Caco-2 (cell line): ENCODE measurements at regions of chr2 and their contacts with region 1.

Region 1: GRCh38 chr2:113080134-113080533 is 12.4 kb downstream of the IL1F10 start:
- DNase-seq: peak in 1 of 2 experiments; percentile 74
- H3K4me3 ChIP-seq: no peak overlapping the region
- H3K4me3 Mint-ChIP-seq: no peak overlapping the region
- H3K27ac Mint-ChIP-seq: no peak overlapping the region
- H3K4me1 ChIP-seq: no peaks in the 10 kb centered on the region
- H3K4me1 Mint-ChIP-seq: no peaks in the 10 kb centered on the region
- H3K27me3 ChIP-seq: no peaks in the 10 kb centered on the region; the same call in 1 of the 2 replicates
- H3K27me3 Mint-ChIP-seq: peaks cover 2% of the 10 kb centered on the region
- CTCF ChIP-seq: peak; percentile 84 to 91

Region 2: GRCh38 chr2:112821142-112821541 is 259.0 kb before region 1 on chr2:
- CTCF ChIA-PET with region 1: no interaction called
- POLR2A ChIA-PET with region 1: no interaction called
- intact Hi-C with region 1: no loop called
- DNase-seq: no peak
- H3K4me3 ChIP-seq: no peak overlapping the region
- H3K4me3 Mint-ChIP-seq: no peak overlapping the region
- H3K27ac Mint-ChIP-seq: no peak overlapping the region
- H3K4me1 ChIP-seq: 0 out of 2 replicates have a peak, but pooled peaks cover 5% of the 10 kb centered on the region
- H3K4me1 Mint-ChIP-seq: no peaks in the 10 kb centered on the region
- H3K27me3 ChIP-seq: no peaks in the 10 kb centered on the region
- H3K27me3 Mint-ChIP-seq: no peaks in the 10 kb centered on the region
- CTCF ChIP-seq: no peak

Region 3: GRCh38 chr2:113138428-113139322 is 58.5 kb after region 1 on chr2:
- CTCF ChIA-PET with region 1: interaction called, 34 read pairs
- POLR2A ChIA-PET with region 1: no interaction called
- intact Hi-C with region 1: loop called (anchors 1 kb)
- DNase-seq: peak; percentile 67 to 84
- H3K4me3 ChIP-seq: peak overlapping the region; percentile 27
- H3K4me3 Mint-ChIP-seq: peak overlapping the region; percentile 59
- H3K27ac Mint-ChIP-seq: peak overlapping the region; percentile 61
- H3K4me1 ChIP-seq: peaks cover 12% of the 10 kb centered on the region
- H3K4me1 Mint-ChIP-seq: peaks cover 12% of the 10 kb centered on the region
- H3K27me3 ChIP-seq: no peaks in the 10 kb centered on the region
- H3K27me3 Mint-ChIP-seq: no peaks in the 10 kb centered on the region
- CTCF ChIP-seq: peak; percentile 80 to 81

Region 4: GRCh38 chr2:113181258-113182051 is 101.3 kb after region 1 on chr2:
- CTCF ChIA-PET with region 1: interaction called, 12 read pairs
- POLR2A ChIA-PET with region 1: no interaction called
- intact Hi-C with region 1: loop called (anchors 5 kb)
- DNase-seq: no peak
- H3K4me3 ChIP-seq: no peak overlapping the region
- H3K4me3 Mint-ChIP-seq: no peak overlapping the region
- H3K27ac Mint-ChIP-seq: no peak overlapping the region
- H3K4me1 ChIP-seq: peaks cover 31% of the 10 kb centered on the region
- H3K4me1 Mint-ChIP-seq: peaks cover 10% of the 10 kb centered on the region
- H3K27me3 ChIP-seq: no peaks in the 10 kb centered on the region; the same call in 1 of the 2 replicates
- H3K27me3 Mint-ChIP-seq: no peaks in the 10 kb centered on the region
- CTCF ChIP-seq: no peak

Region 5: DNA sequence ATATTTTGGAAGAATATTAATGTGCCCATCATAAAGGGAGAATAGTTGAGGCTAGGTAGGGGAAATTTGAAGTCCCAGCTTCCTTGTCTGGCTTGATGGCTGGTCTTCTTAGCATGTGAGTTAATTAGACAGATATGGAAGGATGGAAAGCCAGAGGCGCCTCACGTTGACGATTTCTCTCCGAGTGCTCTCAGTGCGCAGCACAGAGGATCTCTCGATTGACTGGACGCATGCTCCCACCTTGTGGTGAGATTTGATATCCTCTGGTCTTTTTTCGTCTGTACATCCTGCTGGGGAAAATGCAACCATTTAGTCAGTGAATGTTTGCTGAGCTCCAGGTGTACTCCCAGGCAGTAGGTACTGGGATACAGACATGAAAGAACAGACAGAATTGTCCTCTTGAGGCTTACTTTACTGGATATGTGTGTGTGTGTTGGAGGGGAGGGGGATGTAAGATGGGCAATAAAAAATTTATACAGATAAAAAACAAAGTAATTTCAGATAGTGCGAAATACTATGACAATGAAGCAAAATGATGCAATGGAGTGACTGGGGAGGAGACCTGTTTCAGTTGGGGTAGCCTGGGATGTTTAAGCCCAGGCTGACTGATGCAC is 290.5 kb after region 1 on chr2:
- CTCF ChIA-PET with region 1: interaction called, 5 read pairs
- POLR2A ChIA-PET with region 1: no interaction called
- intact Hi-C with region 1: loop called (anchors 5 kb)
- DNase-seq: peak; percentile 84 to 85
- H3K4me3 ChIP-seq: no peak overlapping the region
- H3K4me3 Mint-ChIP-seq: no peak overlapping the region
- H3K27ac Mint-ChIP-seq: no peak overlapping the region
- H3K4me1 ChIP-seq: peaks cover 19% of the 10 kb centered on the region
- H3K4me1 Mint-ChIP-seq: peaks cover 22% of the 10 kb centered on the region
- H3K27me3 ChIP-seq: no peaks in the 10 kb centered on the region
- H3K27me3 Mint-ChIP-seq: no peaks in the 10 kb centered on the region
- CTCF ChIP-seq: peak; percentile 63 to 84